Psoas muscle (tissue), 8 donors: ENCODE measurements at regions of chr12 and their contacts with region 1.

Region 1: DNA sequence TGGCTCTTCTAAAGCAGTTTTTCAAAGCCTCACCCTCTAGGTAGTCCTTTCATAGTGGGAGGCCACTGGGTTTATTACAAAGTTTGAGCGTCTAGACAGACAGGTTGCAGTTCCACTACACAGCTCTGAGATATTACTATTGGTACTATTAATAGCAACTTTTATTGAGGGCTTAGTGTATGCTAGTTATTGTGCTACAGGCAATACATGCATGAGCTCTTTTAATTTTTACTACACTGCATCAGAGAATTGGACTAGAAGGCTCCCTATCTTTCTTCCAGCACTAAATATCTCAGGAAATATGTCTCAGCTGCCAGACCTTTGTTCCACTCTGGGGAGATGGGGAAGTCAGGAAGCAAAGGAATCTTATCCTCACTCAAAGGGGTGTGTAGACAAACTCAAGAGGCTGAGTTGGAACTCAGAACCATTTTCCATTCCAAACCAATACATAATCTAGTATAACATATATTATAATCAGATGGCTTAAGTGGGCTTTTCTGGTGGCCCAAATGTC is 161.8 kb upstream of the SLC38A2 start:
- DNase-seq: no peak
- ATAC-seq: peak in 1 of 4 donors; percentile 50
- H3K4me3 ChIP-seq: no peak overlapping the region
- H3K27ac ChIP-seq: no peak overlapping the region
- H3K4me1 ChIP-seq: peaks cover 35% of the 10 kb centered on the region
- H3K27me3 ChIP-seq: no peaks in the 10 kb centered on the region
- CTCF ChIP-seq: no peak

Region 2: DNA sequence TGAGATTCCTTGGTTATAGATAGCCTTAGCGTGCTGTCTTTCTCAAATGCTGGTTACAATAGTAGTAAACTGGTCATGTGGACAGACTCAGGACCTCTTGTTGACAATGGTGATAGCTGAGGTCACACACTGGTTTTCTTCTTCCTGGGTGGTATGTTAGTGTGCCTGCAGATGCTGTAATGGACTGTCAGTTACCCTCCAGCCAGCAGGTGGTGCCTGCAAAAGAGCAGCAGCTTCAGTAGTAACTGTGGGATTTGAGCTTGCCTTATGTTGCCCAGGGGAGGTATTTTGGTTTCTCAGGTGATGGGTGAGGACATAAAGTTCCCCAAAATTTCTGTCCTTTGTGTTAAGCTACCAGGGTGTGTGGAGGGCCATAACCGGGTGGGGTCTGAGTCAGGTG is 510.3 kb before region 1 on chr12:
- intact Hi-C with region 1: no loop called
- DNase-seq: no peak
- ATAC-seq: no peak
- H3K4me3 ChIP-seq: no peak overlapping the region
- H3K27ac ChIP-seq: no peak overlapping the region
- H3K4me1 ChIP-seq: no peaks in the 10 kb centered on the region
- H3K27me3 ChIP-seq: peaks cover 0 to 3% (median 0%) of the 10 kb centered on the region in 3 donors
- CTCF ChIP-seq: no peak

Region 3: DNA sequence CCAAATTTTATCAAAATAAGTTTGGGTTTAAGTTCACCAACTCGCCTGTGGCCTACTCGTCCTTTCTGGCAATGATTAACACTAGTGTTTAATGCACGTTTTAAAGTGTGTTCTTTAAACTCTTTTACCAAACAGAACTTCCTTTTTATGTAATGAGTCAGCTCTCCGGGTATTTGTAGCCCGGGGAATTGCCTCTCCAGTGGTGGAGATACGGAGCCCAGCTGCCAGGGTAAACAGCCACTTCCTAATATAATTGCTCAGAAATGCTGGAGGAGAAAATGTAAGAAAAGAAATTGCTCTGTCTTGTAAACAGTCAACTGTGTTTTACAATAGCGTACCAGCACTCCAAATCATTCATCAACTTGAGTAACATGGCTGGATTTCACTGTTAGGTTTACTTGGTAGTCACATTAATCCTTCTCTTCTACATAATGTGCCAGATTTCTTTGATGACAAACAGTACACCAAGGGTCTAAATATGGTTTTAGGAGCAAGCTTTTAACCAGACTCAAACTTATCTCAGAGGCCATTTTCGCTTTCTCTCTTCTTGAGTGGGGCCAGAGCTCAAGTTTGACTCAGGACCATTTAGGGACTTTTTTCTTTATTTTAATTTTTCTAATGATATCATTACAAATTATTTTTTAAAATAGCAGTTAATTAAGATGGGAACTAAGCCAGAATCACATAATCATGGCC is 60.6 kb before region 1 on chr12:
- intact Hi-C with region 1: loop called (anchors 2 to 5 kb)
- DNase-seq: peak; percentile 45 to 58
- ATAC-seq: peak; percentile 68 to 79 (median 69)
- H3K4me3 ChIP-seq: peak overlapping the region; percentile 28
- H3K27ac ChIP-seq: peak overlapping the region; percentile 91
- H3K4me1 ChIP-seq: peaks cover 37% of the 10 kb centered on the region
- H3K27me3 ChIP-seq: no peaks in the 10 kb centered on the region
- CTCF ChIP-seq: no peak